Activated CD4-positive, alpha-beta memory T cell treated with anti-CD3 and anti-CD28 coated beads for 36 hours (primary cell): ENCODE measurements at regions of chr22 and their contacts with region 1.

Region 1: GRCh38 chr22:43230971-43231723 is 44.2 kb upstream of the TTLL12 start:
- DNase-seq: peak; percentile 75
- H3K4me3 Mint-ChIP-seq: no peak overlapping the region
- H3K27ac Mint-ChIP-seq: no peak overlapping the region
- H3K4me1 Mint-ChIP-seq: peaks cover 2% of the 10 kb centered on the region
- H3K27me3 Mint-ChIP-seq: no peaks in the 10 kb centered on the region

Region 2: DNA sequence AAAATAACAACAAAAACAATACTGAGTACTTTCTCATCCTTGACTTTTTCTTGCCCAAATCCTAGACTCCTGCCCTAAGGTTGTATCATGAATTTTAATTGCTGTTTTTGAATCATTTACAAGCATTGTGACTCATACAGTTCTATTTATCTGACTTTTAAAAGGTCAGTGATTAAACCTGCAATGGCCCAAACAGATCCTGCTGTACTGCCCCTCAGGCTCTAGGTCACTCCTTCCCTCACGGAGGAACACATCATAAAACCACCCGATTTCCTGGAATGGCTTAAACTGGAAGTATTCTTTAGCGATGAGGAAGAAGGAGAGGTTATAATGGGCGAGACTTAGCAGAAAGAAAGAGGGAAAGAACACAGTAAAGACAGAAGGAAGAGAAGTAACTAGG is 386.4 kb before region 1 on chr22:
- CTCF ChIA-PET with region 1: no interaction called
- POLR2A ChIA-PET with region 1: no interaction called
- intact Hi-C with region 1: no loop called
- DNase-seq: no peak
- H3K4me3 Mint-ChIP-seq: no peak overlapping the region
- H3K27ac Mint-ChIP-seq: no peak overlapping the region
- H3K4me1 Mint-ChIP-seq: peaks cover 14% of the 10 kb centered on the region
- H3K27me3 Mint-ChIP-seq: no peaks in the 10 kb centered on the region

Region 3: DNA sequence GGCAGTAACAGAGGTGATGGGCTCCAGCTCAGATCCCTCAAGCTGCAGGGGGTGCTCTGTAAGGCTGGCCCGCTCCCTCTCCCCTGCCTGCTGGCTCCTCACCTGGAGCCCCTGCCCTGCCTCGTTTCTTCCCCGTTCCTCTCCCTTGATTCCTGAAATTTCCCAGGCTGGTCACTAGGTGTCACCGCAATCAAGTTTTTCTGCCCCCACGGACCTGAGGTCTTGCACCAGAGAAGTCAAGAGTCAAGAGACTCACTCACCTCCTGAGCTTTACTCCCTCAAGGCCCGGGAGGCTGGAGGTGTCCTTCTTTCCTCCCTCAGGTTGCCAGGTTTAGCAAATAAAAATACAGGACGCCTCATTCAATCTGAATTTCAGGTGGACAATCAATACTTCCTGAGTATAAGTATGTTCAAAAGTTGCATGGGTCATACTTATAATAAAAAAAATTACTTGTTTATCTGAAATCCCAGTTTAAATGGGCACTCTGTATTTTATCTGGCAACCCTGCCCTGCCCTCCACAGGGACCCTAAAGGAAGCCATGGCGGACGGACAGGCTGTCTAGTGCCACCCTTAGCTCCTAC is 42.8 kb after region 1 on chr22:
- CTCF ChIA-PET with region 1: interaction called, 11 read pairs
- POLR2A ChIA-PET with region 1: no interaction called
- intact Hi-C with region 1: loop called (anchors 5 kb)
- DNase-seq: peak; percentile 59
- H3K4me3 Mint-ChIP-seq: no peak overlapping the region
- H3K27ac Mint-ChIP-seq: no peak overlapping the region
- H3K4me1 Mint-ChIP-seq: no peaks in the 10 kb centered on the region
- H3K27me3 Mint-ChIP-seq: peaks cover 3% of the 10 kb centered on the region

Region 4: DNA sequence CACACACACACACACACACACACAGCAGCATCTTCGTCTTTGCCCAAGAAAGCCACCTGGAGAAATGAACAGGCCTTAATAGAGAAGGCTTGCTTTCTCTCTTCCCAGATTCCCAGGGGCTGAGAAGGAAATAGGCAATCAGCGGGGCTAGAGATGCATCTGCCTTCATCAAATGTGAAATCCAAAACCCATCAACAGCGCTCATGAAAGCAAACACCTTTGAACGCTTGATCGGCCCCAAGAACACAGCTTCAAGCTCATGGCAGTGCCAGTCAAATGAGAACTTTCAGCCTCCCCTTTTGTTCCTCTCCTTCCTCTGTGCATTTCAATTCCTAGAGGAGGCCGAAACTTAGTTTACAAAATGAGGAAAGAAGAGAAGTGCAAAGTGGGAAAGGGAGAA is 458.2 kb after region 1 on chr22:
- CTCF ChIA-PET with region 1: no interaction called
- POLR2A ChIA-PET with region 1: no interaction called
- intact Hi-C with region 1: no loop called
- DNase-seq: no peak
- H3K4me3 Mint-ChIP-seq: no peak overlapping the region
- H3K27ac Mint-ChIP-seq: no peak overlapping the region
- H3K4me1 Mint-ChIP-seq: no peaks in the 10 kb centered on the region
- H3K27me3 Mint-ChIP-seq: peaks cover 24% of the 10 kb centered on the region